ENCODE measurements at regions of chr9 and their contacts with region 1.

Region 1: DNA sequence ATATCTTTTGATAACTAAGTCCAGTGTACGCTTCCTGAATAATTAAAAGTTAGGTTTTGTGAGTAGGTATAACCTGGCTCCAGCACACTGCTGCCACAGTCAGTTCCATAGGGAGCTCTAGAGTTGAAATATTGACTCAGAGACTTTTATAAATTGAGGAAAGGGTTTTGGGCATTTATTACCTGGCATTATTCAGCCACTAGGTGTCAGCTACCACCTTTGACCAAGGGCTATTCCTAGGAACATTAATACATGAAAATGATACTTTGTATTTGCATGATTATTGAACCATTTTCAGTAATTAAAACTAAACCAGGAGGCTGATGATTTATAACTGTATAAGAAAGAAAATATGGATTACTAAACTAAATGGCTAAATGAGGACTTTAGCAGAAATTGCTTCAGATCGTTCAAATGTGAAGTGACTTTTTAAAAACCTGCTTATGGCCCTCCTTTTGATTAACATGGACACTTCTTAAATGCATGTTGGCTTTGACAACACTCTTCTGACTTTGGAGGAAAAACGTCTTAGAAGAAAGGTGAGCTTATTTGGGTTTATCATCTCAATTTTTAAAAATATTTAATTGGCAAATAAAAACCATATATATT is 83.0 kb downstream of the SMC2 start:
- DNase-seq: peak in 1 of 3 donors; percentile 21
- ATAC-seq: peak; percentile 35
- H3K4me3 ChIP-seq: no peak overlapping the region
- H3K4me1 ChIP-seq: no peaks in the 10 kb centered on the region
- CTCF ChIP-seq: peak; percentile 29

Region 2: GRCh38 chr9:104386425-104387069 is 209.4 kb after region 1 on chr9:
- intact Hi-C with region 1: loop called in 1 of 2 experiments (anchors 10 kb)
- DNase-seq: no peak
- ATAC-seq: peak; percentile 80
- H3K4me3 ChIP-seq: no peak overlapping the region
- H3K4me1 ChIP-seq: no peaks in the 10 kb centered on the region
- CTCF ChIP-seq: peak; percentile 26